ENCODE measurements at regions of chr15 and their contacts with region 1.

Region 1: DNA sequence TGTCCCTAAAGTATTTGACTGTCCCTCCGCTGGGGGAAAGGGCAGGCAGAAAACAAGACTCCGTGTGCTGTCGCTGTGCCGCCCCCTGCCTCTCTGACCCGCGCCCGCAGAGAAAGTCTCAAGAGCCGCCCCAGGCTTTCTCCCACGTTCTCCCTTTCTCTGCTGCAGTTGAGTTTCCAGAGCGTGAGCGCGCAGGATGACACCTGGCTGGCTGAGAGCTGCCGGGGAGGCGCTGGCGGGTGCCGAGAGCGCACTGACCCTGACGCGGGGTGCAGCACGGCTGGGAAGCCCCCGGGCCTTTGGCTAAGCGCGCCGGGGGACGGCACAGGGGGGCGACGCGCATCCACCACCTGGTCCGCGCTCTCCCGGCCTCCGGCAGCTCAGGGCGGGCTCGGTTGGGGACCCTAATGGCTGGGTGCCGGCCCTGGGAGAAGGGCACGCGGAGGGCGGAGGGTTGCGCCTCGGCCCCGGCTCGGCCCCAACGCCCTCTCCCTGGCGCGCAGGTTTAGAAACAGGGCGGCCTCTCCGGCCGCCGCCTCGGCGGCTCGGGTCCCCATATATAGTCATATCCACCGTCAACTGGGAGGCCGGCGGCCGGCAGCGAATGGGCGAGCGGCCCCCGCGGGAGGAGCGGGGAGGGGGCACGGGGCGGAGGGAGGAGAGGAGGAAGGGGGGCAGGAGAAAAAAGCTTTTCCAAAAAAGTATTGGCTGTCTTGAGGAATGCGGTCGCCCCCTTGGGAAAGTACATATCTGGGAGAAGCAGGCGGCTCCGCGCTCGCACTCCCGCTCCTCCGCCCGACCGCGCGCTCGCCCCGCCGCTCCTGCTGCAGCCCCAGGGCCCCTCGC is at the start of gene TPM1:
- DNase-seq: peak; percentile 91 to 93
- H3K4me3 ChIP-seq: peak within 1 kb of the TSS; percentile 73
- H3K4me3 Mint-ChIP-seq: peak within 1 kb of the TSS; percentile 80
- H3K27ac Mint-ChIP-seq: peak within 1 kb of the TSS; percentile 96
- H3K4me1 ChIP-seq: peaks cover 60% of the 10 kb centered on the region
- H3K4me1 Mint-ChIP-seq: peaks cover 41% of the 10 kb centered on the region
- H3K27me3 ChIP-seq: no peaks in the 10 kb centered on the region
- H3K27me3 Mint-ChIP-seq: no peaks in the 10 kb centered on the region
- CTCF ChIP-seq: peak in 1 of 2 experiments; percentile 43
- total RNA-seq, gene TPM1: 193 and 209 TPM in 2 replicates

Region 2: GRCh38 chr15:62896978-62897647 is 145.1 kb before region 1 on chr15:
- CTCF ChIA-PET with region 1: interaction called, 5 read pairs
- POLR2A ChIA-PET with region 1: no interaction called
- intact Hi-C with region 1: loop called (anchors 1 kb)
- DNase-seq: peak; percentile 81 to 90
- H3K4me3 ChIP-seq: 0 out of 2 replicates have a peak overlapping the region, but pooled peaks have one; percentile 1
- H3K4me3 Mint-ChIP-seq: peak overlapping the region; percentile 55
- H3K27ac Mint-ChIP-seq: peak overlapping the region; percentile 53
- H3K4me1 ChIP-seq: peaks cover 48% of the 10 kb centered on the region
- H3K4me1 Mint-ChIP-seq: peaks cover 41% of the 10 kb centered on the region
- H3K27me3 ChIP-seq: no peaks in the 10 kb centered on the region
- H3K27me3 Mint-ChIP-seq: no peaks in the 10 kb centered on the region
- CTCF ChIP-seq: no peak

Region 3: DNA sequence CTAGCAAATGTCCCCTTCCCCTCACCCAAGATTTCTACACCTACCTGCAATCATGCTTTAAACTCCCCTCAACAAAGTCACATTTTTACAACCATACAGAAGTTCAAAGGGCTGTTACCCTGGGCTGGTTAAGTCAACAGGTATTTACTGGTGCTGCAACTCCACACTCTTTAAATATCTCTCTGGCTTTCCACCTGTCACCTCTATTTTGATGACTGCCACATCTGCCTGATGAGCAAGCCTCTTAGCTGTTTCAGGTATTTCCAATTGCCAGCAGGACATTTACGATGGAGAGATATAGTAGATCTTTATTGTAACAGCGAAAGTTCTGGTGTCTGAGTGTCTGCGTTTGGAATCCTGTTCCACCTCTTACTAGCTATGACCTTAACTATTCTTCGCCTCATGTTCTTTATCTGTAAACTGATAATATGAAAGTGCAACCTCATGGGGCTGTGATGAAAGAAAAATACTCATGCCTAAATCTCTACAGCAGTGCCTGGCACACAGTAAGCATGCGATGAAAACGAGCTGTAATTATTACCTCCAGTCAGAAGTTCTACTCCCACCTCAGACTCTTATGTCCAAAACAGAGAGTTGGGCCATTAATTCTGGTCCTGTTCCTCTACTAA is 43.8 kb before region 1 on chr15:
- CTCF ChIA-PET with region 1: interaction called, 7 read pairs
- POLR2A ChIA-PET with region 1: interaction called, 4 read pairs
- intact Hi-C with region 1: loop called (anchors 1 kb)
- DNase-seq: peak; percentile 62 to 70
- H3K4me3 ChIP-seq: no peak overlapping the region
- H3K4me3 Mint-ChIP-seq: no peak overlapping the region
- H3K27ac Mint-ChIP-seq: peak overlapping the region; percentile 72
- H3K4me1 ChIP-seq: peaks cover 56% of the 10 kb centered on the region
- H3K4me1 Mint-ChIP-seq: peaks cover 39% of the 10 kb centered on the region
- H3K27me3 ChIP-seq: no peaks in the 10 kb centered on the region
- H3K27me3 Mint-ChIP-seq: no peaks in the 10 kb centered on the region
- CTCF ChIP-seq: no peak

Region 4: DNA sequence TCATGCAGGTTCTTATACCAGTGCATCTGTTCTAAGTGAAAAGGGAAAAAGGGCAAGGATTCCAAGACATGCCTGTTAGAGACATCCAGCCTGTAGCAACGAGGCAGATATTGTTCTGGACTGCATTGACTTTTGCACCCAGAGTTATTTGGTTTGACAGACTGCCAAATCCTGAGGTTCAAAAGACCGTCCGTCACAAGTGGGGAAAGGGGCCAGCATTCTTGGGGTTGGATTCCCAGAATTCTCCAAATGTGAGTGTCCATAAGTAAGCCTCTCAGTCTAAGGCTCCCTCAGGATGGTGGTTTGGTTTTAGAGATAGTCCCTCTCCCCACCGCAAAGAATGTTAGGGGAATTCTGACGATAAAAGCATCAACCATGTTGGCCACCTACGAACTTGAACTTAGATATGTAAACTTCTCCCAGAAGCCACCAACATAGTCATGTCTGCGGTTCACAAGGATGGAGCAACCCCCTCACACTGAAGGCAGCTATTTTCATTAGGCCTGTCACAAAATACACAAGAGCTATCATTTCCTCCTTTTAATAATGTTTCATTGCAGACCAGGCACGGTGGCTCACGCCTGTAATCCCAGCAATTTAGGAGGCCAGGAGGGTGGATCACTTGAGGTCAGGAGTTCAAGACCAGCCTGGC is 65.8 kb after region 1 on chr15:
- CTCF ChIA-PET with region 1: no interaction called
- POLR2A ChIA-PET with region 1: no interaction called
- intact Hi-C with region 1: no loop called
- DNase-seq: no peak
- H3K4me3 ChIP-seq: no peak overlapping the region
- H3K4me3 Mint-ChIP-seq: no peak overlapping the region
- H3K27ac Mint-ChIP-seq: no peak overlapping the region
- H3K4me1 ChIP-seq: no peaks in the 10 kb centered on the region
- H3K4me1 Mint-ChIP-seq: no peaks in the 10 kb centered on the region
- H3K27me3 ChIP-seq: no peaks in the 10 kb centered on the region
- H3K27me3 Mint-ChIP-seq: no peaks in the 10 kb centered on the region
- CTCF ChIP-seq: no peak

Region 5: GRCh38 chr15:63414474-63415120 is 372.4 kb after region 1 on chr15:
- CTCF ChIA-PET with region 1: no interaction called
- POLR2A ChIA-PET with region 1: interaction called, 12 read pairs
- intact Hi-C with region 1: loop called (anchors 10 kb)
- DNase-seq: no peak
- H3K4me3 ChIP-seq: no peak overlapping the region
- H3K4me3 Mint-ChIP-seq: no peak overlapping the region
- H3K27ac Mint-ChIP-seq: no peak overlapping the region
- H3K4me1 ChIP-seq: no peaks in the 10 kb centered on the region
- H3K4me1 Mint-ChIP-seq: no peaks in the 10 kb centered on the region
- H3K27me3 ChIP-seq: no peaks in the 10 kb centered on the region
- H3K27me3 Mint-ChIP-seq: no peaks in the 10 kb centered on the region
- CTCF ChIP-seq: no peak